ENCODE measurements at regions of chr7 and their contacts with region 1.

Region 1: GRCh38 chr7:4689668-4690067 is 7.6 kb downstream of the FOXK1 start:
- DNase-seq: no peak
- ATAC-seq: peak; percentile 81
- H3K4me3 ChIP-seq: peak overlapping the region; percentile 22; the same call in 1 of the 2 replicates
- H3K27ac ChIP-seq: 0 out of 2 replicates have a peak overlapping the region, but pooled peaks have one; percentile 20
- H3K4me1 ChIP-seq: peaks cover 20% of the 10 kb centered on the region
- H3K27me3 ChIP-seq: no peaks in the 10 kb centered on the region
- CTCF ChIP-seq: no peak
- EP300 ChIP-seq: no peak
- POLR2A ChIP-seq: no peak
- RAD21 ChIP-seq: no peak

Region 2: DNA sequence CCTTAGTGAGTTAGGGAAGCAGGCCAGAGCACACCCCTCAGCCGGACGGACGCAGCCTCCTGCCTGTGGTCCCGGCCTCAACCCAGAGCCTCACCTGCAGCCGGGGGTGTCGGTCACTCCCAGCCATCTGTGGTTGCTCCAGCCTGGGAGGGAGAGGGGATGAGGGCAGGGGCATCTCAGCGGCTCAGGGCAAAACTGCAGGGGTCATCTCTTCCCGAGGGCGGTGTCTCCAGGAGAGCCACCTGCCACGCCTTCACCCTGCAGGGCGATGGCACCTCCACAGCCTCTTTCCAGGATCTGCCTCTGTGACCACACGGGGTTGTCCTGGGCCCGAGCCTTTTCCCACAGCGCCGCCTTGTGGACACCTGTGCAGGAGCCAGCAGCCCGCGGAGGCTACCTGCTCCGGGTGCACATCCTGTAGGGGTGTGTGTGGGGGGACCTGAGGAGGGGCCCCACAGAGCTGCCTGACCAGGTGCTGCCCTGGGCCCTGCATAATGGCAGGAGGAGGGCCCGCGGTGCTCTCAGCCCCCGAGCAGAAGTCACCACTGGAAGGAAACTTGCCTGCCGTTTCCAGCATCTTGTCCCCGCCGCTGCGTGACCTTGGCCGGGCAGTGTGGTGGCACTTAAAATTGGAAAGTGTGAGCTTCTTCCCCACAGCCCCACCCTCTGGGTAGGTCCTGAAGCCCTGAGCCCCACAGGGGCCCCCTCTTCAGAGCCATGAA is 64.2 kb after region 1 on chr7:
- CTCF ChIA-PET with region 1: interaction called, 5 read pairs
- POLR2A ChIA-PET with region 1: no interaction called
- RAD21 ChIA-PET with region 1: no interaction called
- SMC1A ChIA-PET with region 1: interaction called, 3 read pairs
- in situ Hi-C with region 1: loop called (anchors 5 kb)
- intact Hi-C with region 1: no loop called
- DNase-seq: no peak
- ATAC-seq: peak; percentile 99
- H3K4me3 ChIP-seq: no peak overlapping the region
- H3K27ac ChIP-seq: no peak overlapping the region
- H3K4me1 ChIP-seq: peaks cover 14% of the 10 kb centered on the region
- H3K27me3 ChIP-seq: no peaks in the 10 kb centered on the region
- CTCF ChIP-seq: peak; percentile 91 to 97 (median 94)
- EP300 ChIP-seq: no peak
- POLR2A ChIP-seq: no peak
- RAD21 ChIP-seq: peak; percentile 98

Region 3: GRCh38 chr7:5020097-5020496 is 330.4 kb after region 1 on chr7:
- CTCF ChIA-PET with region 1: no interaction called
- POLR2A ChIA-PET with region 1: no interaction called
- RAD21 ChIA-PET with region 1: no interaction called
- SMC1A ChIA-PET with region 1: no interaction called
- in situ Hi-C with region 1: no loop called
- intact Hi-C with region 1: no loop called
- DNase-seq: no peak
- ATAC-seq: no peak
- H3K4me3 ChIP-seq: no peak overlapping the region
- H3K27ac ChIP-seq: no peak overlapping the region
- H3K4me1 ChIP-seq: no peaks in the 10 kb centered on the region
- H3K27me3 ChIP-seq: no peaks in the 10 kb centered on the region
- CTCF ChIP-seq: no peak
- EP300 ChIP-seq: no peak
- POLR2A ChIP-seq: no peak
- RAD21 ChIP-seq: no peak

Measured in GM12878 (cell line).